Activated T-helper 1 cell treated with anti-CD3 and anti-CD28 coated beads, Interleukin-12 subunit alpha, Interleukin-12 subunit beta, Interleukin-2, Interleukin-4 antibody, amounts not matched to agents 30 ng/mL and 10 ng/mL and 1 ng/mL, durations not matched to agents 14 hours and 24 hours and 36 hours (primary cell): ENCODE measurements at regions of chrX and their contacts with region 1.

Region 1: DNA sequence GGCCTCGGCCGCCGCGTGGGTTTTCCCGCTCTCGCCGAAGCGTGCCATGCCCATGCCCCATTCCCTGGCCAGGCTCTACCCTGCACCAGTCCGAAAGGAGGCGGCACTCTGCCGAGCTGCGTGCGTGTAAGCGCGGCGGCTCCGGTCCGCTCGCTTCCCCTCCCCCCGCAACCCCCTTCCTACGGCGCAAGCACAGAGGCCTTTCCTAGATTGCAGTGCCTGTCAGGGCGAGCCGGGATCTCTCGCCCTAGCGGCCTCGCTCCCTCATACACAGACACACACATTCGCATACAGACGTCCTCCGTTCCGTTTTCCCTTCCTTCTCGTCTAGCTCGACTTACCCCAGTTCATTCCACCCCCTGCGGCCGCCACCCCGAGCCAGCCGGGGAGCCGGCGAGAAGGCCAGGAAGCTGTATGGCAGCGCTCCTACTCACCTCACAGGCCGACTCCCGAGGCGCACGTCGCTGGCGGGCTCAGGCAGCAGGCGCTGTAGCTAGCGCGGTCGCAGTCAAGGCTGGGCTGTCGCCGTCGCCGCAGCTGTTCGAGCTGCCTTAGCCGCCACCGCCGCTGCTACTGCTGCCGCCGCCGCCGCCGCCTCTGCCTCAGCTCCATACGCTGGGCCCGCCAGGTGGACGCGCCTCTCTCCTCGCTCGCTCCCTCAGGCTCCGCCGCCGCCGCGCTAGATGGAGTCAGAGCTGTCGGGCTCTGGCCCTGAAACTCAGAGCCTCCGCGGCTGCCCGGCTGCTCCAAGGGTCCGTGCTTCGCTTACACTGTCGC is 615 bp downstream of the NEXMIF start:
- DNase-seq: peak; percentile 20
- H3K4me3 Mint-ChIP-seq: peak overlapping the region; percentile 87
- H3K27ac Mint-ChIP-seq: peak overlapping the region; percentile 90
- H3K4me1 Mint-ChIP-seq: no peaks in the 10 kb centered on the region
- H3K27me3 Mint-ChIP-seq: peaks cover 5% of the 10 kb centered on the region

Region 2: DNA sequence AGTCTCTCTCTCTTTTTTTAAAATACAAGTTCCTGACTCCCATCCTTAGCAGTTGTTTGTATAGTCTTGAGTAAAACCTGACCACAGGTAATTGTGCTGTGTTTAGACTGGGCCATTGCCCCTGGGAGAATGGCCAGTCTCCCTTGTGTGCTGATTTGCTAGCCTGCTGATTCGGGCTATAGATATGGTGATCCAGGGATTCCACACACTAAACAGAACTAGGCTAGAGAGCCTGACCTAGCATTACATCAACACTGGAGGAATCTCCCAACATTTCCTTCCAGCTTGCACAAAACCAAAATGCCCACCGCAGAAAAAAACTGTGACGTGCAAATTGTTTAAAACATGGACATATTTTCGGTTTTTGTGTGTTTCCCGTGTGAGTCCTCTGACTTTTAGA is 354.4 kb after region 1 on chrX:
- intact Hi-C with region 1: loop called (anchors 10 kb)
- DNase-seq: no peak
- H3K4me3 Mint-ChIP-seq: no peak overlapping the region
- H3K27ac Mint-ChIP-seq: no peak overlapping the region
- H3K4me1 Mint-ChIP-seq: peaks cover 48% of the 10 kb centered on the region
- H3K27me3 Mint-ChIP-seq: no peaks in the 10 kb centered on the region